Activated B cell treated with CpG ODN at 0.5 μM for 24 hours (primary cell): ENCODE measurements at regions of chr12 and their contacts with region 1.

Region 1: DNA sequence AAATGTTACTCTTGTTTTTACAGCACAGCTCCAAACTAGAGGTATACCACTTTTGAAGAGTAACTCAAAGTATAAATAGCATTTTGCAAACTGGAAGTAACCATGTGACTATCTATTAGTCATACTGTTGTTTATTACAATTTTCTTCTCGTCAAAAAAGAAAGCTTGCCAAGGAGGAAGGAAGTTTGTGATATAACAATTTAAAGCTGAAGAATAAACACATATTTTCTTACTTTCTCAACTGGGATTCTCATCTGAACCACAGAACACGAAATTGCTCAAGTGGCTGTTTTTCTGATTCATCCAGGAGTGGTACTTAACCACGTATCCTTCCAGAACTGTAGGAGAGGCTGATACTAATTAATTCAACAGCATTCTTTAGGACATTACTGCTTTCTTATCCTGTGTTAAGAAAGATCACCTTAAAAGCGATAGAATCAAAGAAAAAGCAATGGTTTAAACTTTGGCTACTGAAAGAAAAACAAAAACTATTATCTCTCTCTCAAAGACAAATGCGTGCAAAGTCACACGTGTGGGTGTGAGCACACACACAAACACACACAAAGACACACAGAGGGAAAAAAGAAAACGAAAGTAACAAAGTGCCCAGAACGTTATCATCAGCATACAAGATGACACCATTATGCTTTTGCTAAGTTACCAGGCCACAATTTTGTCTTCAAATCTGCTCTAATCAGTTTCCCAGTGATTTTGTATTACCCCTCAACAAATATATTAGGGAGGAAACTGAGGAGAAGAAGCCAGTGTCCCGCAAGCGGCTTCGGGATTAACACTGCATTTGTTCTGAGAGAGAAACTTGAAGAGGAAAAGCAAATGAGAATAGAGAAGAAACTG is at the start of gene CLEC2B:
- DNase-seq: no peak
- ATAC-seq: peak; percentile 63
- H3K4me3 Mint-ChIP-seq: peak within 1 kb of the TSS; percentile 95
- H3K27ac Mint-ChIP-seq: peak within 1 kb of the TSS; percentile 98
- H3K4me1 Mint-ChIP-seq: peaks cover 37% of the 10 kb centered on the region
- H3K27me3 Mint-ChIP-seq: peaks cover 2% of the 10 kb centered on the region
- CTCF ChIP-seq: no peak
- total RNA-seq, gene CLEC2B: 18.4 and 19.1 TPM in 2 replicates

Region 2: DNA sequence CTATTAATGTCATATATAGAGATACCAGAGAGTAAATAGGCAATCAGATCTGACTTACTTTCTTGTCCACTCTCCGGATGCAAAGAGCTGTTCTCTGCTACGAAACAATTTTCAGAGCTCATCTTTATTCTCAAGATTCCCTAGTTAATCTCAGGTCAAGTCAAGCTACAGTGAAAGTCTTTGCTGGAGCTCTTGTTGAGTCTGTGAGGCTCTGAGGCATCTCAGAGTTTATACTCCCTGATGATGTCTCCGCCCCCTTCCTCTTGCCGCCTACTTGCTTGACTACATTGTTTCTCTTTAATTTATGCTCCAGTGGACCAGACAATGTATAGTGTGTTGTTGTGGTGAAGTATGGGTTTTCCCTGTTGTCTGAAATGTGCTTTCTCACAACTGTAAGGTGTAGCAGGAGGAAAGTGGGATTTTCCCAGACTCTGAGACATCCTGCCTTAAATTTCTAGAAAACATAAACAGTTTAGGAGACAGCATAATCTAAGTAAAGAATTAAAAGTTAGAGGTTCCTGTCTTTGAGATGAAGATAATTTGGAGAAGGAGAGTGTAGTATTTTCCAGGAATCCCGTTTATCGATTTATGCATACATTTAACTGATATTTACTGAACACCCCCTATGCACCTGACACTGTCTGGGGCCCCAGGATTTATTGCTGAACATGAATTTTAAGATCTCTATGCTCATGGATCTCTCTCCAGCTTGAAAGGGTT is 108.7 kb before region 1 on chr12 and contains the start of gene CD69:
- CTCF ChIA-PET with region 1: no interaction called
- POLR2A ChIA-PET with region 1: interaction called, 16 read pairs
- intact Hi-C with region 1: loop called (anchors 2 kb)
- DNase-seq: peak; percentile 33
- ATAC-seq: peak; percentile 54
- H3K4me3 Mint-ChIP-seq: peak within 1 kb of the TSS; percentile 90
- H3K27ac Mint-ChIP-seq: peak within 1 kb of the TSS; percentile 93
- H3K4me1 Mint-ChIP-seq: peaks cover 81% of the 10 kb centered on the region
- H3K27me3 Mint-ChIP-seq: no peaks in the 10 kb centered on the region
- CTCF ChIP-seq: no peak
- total RNA-seq, gene CD69: 23.7 and 26.7 TPM in 2 replicates

Region 3: GRCh38 chr12:9813821-9814809 is 55.4 kb before region 1 on chr12:
- CTCF ChIA-PET with region 1: interaction called, 5 read pairs
- POLR2A ChIA-PET with region 1: no interaction called
- intact Hi-C with region 1: loop called (anchors 5 kb)
- DNase-seq: peak; percentile 80
- ATAC-seq: peak; percentile 97
- H3K4me3 Mint-ChIP-seq: peak overlapping the region; percentile 73
- H3K27ac Mint-ChIP-seq: no peak overlapping the region
- H3K4me1 Mint-ChIP-seq: peaks cover 20% of the 10 kb centered on the region
- H3K27me3 Mint-ChIP-seq: peaks cover 18% of the 10 kb centered on the region
- CTCF ChIP-seq: peak; percentile 47

Region 4: DNA sequence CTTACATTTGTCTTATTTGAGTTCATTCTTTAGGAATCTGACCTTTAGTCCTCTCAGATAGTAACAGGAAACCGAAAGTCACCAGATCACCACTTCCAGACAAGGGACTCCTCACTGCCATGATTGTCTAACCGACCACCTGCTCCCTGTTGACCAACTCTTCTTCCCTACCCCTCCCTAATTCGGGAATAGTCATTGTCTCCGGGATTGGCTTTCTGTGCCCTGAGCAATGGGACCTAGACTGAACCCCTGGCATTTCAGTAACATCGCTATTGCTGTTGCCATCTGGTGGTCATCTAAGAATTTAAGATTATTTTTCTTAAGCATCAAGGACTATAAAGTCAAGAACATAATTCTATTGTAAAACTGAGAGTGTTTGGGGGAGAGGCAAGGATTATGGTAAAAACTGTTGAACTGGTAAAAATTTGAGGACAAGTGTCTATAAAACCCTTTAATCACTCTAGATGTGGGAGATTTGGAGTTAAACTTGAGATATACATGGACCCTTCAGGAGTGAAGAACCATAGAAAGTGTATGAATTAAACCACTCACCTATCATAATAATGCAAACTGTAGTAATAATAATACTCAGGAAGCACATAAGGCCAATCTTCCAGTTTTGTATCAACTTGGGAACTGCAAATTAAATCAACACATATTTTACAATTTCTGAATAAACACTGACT is 56.3 kb after region 1 on chr12:
- CTCF ChIA-PET with region 1: no interaction called
- POLR2A ChIA-PET with region 1: no interaction called
- intact Hi-C with region 1: loop called (anchors 2 kb)
- DNase-seq: no peak
- ATAC-seq: peak; percentile 40
- H3K4me3 Mint-ChIP-seq: peak overlapping the region; percentile 62
- H3K27ac Mint-ChIP-seq: no peak overlapping the region
- H3K4me1 Mint-ChIP-seq: peaks cover 4% of the 10 kb centered on the region
- H3K27me3 Mint-ChIP-seq: peaks cover 12% of the 10 kb centered on the region
- CTCF ChIP-seq: no peak

Region 5: DNA sequence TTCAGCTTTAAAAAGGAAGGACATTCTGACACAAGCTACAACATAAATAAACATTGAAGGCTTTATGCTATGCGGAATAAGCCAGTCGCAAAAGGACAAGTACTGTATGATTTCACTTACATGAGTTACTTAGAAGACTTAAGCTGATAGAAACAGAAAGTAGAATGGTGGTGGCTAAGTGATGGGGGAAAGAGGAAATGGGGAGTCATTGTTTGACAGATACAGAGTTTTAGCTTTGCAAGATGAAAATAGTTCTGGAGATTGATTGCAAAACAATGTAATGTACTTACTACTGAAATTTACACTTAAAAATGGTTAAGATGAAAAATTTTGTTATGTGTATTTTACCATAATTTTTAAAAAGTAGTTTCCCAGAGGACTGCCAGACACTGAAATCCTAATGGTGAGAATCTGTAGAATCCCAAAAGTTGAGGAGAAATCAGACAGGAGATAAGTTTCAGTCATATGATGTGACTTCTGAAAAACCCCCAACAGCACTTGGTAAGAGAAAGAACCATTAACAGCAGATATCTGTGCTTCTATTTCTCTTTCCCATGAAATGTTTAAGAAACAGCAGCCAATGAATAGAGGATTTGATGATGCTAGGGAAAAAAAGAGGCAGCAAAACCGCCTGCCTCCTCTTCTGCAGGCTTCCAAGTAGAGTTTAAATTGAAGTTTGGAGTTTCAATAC is 79.2 kb after region 1 on chr12:
- CTCF ChIA-PET with region 1: no interaction called
- POLR2A ChIA-PET with region 1: no interaction called
- intact Hi-C with region 1: loop called (anchors 5 kb)
- DNase-seq: no peak
- ATAC-seq: peak; percentile 90
- H3K4me3 Mint-ChIP-seq: peak overlapping the region; percentile 22
- H3K27ac Mint-ChIP-seq: peak overlapping the region; percentile 80
- H3K4me1 Mint-ChIP-seq: peaks cover 48% of the 10 kb centered on the region
- H3K27me3 Mint-ChIP-seq: no peaks in the 10 kb centered on the region
- CTCF ChIP-seq: no peak

Region 6: GRCh38 chr12:10364815-10365622 is 495.5 kb after region 1 on chr12:
- CTCF ChIA-PET with region 1: no interaction called
- POLR2A ChIA-PET with region 1: interaction called, 4 read pairs
- intact Hi-C with region 1: loop called (anchors 2 kb)
- DNase-seq: peak; percentile 35
- ATAC-seq: peak; percentile 73
- H3K4me3 Mint-ChIP-seq: no peak overlapping the region
- H3K27ac Mint-ChIP-seq: no peak overlapping the region
- H3K4me1 Mint-ChIP-seq: peaks cover 7% of the 10 kb centered on the region
- H3K27me3 Mint-ChIP-seq: no peaks in the 10 kb centered on the region
- CTCF ChIP-seq: no peak